Right ventricle myocardium inferior (tissue), 1 donor: ENCODE measurements at regions of chr5 and their contacts with region 1.

Region 1: GRCh38 chr5:179166886-179167841 is 107.0 kb downstream of the ZNF354C start:
- DNase-seq: no peak
- ATAC-seq: peak; percentile 68

Region 2: GRCh38 chr5:178895651-178896571 is 271.3 kb before region 1 on chr5 and contains the start of gene ZFP2:
- intact Hi-C with region 1: no loop called
- DNase-seq: peak; percentile 77
- ATAC-seq: peak; percentile 97
- total RNA-seq, gene ZFP2: 0.70 TPM

Region 3: DNA sequence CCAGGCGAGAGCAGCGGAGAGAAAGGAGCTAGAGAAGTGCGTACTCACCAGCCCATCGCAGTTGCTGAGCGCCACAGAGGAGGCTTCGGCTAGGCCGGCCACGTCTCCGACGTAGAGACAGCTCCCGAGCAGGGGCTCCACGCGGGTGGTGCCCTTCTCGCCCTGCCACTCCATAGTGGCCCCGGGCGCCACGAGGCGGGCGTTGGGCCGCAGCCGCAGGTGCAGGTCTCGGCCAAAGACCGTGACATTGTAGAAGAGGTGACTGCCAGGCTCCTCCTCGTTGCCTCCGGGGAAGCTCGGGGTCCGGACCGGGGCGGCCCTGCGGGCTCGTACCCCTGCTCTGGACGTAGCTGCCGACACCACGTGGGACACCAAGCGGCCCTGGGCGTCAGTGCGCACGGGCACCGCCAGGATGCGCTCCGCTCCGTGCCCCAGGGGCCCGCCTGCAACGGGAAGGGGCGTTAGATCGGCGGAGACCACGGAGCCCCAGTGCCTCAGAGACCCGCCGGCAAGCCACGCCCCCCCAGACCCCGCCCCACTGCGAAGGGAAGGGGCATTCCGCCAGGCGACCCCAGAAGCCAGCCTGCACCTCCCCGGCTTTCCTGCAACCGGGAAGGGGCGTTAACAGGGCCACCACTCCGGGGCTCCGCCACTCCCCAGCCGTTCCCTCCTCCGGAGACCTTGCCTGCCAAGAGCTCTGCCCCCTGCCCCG is 176.7 kb after region 1 on chr5:
- intact Hi-C with region 1: loop called (anchors 5 kb)
- DNase-seq: no peak
- ATAC-seq: peak; percentile 67

Region 4: DNA sequence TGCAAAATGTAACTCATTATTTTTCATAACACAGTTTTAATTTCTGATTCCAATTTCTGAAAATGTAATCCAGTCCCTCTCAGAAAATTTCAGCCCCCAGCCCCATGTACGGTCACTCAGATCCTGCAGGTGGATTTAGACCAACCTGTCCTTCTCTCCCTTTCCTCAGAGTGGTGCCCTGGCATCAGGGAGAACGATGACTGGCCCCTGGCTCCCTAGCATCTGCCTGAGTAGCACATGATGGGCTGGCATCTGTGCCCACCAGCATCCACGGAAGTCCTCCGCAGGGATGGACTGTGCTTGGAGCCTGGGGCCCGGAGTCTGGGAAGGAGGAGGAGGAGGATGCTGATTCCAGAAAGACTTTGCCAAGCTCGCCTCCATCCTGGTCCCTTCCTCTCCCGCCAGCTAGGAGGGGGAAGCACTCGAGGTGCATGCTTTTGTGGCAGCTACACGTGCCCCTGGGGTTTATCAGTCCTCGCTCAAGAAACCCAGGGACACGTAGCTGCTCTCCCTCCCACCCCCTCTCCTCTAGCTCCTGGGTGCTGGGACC is 328.8 kb after region 1 on chr5:
- intact Hi-C with region 1: loop called (anchors 1 kb)
- DNase-seq: no peak
- ATAC-seq: no peak